ENCODE measurements at regions of chr4 and their contacts with region 1.

Region 1: GRCh38 chr4:117225471-117225870 is 140.1 kb upstream of the TRAM1L1 start:
- DNase-seq: no peak
- ATAC-seq: no peak
- H3K4me3 ChIP-seq: no peak overlapping the region
- H3K27ac ChIP-seq: no peak overlapping the region
- H3K4me1 ChIP-seq: no peaks in the 10 kb centered on the region
- H3K27me3 ChIP-seq: no peaks in the 10 kb centered on the region
- CTCF ChIP-seq: no peak

Region 2: GRCh38 chr4:117385526-117385925 is 160.1 kb after region 1 on chr4:
- CTCF ChIA-PET with region 1: no interaction called
- POLR2A ChIA-PET with region 1: no interaction called
- intact Hi-C with region 1: loop called (anchors 10 kb)
- DNase-seq: peak; percentile 15
- ATAC-seq: no peak
- H3K4me3 ChIP-seq: no peak overlapping the region
- H3K27ac ChIP-seq: no peak overlapping the region
- H3K4me1 ChIP-seq: no peaks in the 10 kb centered on the region
- H3K27me3 ChIP-seq: no peaks in the 10 kb centered on the region
- CTCF ChIP-seq: no peak